GM10248 (cell line): ENCODE measurements at regions of chr13 and their contacts with region 1.

Region 1: GRCh38 chr13:20197361-20197834 is 4.7 kb upstream of the GJB2 start:
- DNase-seq: peak; percentile 50
- CTCF ChIP-seq: peak; percentile 66

Region 2: DNA sequence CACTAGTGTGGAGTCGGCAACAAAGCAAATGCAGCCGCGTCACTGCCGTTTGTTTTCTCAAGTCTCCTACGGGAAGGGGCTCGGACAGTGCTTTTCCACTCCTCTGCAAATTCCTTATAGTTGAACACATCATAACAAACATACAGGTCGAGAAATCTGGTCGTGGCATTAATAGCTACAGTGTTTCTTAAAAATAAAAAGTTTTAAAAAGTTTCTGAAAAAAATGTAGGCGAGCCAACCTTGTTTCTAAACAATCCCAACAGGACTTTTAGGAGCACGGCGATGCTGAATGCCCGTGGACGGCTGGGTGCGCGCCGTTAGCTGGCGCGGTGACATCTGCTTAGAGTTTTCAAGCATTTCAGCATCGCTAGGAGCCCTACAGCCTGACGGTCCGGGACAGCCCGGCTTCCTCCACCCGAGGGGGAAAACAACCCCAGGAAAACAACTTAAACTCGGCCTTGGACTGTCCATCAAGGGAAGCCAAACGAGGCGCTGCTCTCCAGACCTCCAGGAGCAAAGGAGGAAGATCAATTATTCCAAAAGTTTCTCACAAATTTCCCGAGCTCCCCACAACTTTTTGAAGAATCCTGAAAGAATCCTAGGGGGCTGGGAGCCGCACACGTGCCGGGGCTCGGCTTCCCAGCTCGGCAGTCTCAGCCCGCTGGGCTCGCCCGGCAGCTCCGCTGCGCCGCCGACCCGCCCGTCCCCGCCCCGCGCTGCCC is 37.1 kb before region 1 on chr13:
- CTCF ChIA-PET with region 1: no interaction called
- POLR2A ChIA-PET with region 1: no interaction called
- DNase-seq: no peak
- CTCF ChIP-seq: no peak

Region 3: GRCh38 chr13:20182231-20182846 is 15.1 kb before region 1 on chr13:
- CTCF ChIA-PET with region 1: interaction called, 67 read pairs
- POLR2A ChIA-PET with region 1: no interaction called
- DNase-seq: peak; percentile 79
- CTCF ChIP-seq: peak; percentile 82